Activated CD4-positive, alpha-beta memory T cell treated with anti-CD3 and anti-CD28 coated beads for 36 hours (primary cell): ENCODE measurements at regions of chr6 and their contacts with region 1.

Region 1: GRCh38 chr6:46129629-46130511 is at the start of gene ENPP4:
- DNase-seq: peak; percentile 94
- H3K4me3 Mint-ChIP-seq: peak within 1 kb of the TSS; percentile 86
- H3K27ac Mint-ChIP-seq: peak within 1 kb of the TSS; percentile 57
- H3K4me1 Mint-ChIP-seq: peaks cover 30% of the 10 kb centered on the region
- H3K27me3 Mint-ChIP-seq: no peaks in the 10 kb centered on the region
- total RNA-seq, gene ENPP4: 8.5 to 8.8 TPM

Region 2: DNA sequence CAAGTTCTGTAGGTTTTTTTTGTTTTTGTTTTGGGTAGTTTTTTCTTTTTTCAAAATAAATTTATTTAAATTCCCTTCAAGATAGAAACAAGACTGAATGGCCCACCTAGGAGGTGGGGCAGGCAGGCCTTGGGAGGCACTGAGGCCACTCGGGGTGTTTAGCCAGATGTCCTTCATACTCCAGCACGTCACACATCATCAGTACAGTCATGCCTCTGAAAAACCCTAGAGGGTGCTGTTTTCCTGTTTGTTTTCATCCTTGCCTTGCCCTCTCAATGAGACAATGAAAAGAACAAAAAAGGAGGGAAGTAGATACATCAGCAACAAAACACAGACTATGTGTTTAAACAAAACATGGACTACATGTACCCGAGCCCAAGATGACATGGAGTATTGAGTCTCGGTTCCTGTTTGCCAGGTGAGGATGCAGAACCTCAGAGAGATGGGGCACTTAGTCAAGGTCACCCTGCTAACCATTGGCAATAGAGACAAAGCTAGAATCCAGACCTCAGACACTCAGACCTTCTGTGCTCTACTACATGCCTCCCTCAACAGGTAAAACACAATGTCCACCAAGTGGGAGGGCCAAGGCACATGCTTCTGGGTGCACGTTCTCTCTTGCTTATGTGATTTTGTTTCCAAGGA is 87.4 kb before region 1 on chr6:
- CTCF ChIA-PET with region 1: no interaction called
- POLR2A ChIA-PET with region 1: no interaction called
- intact Hi-C with region 1: loop called (anchors 10 kb)
- DNase-seq: peak; percentile 23
- H3K4me3 Mint-ChIP-seq: no peak overlapping the region
- H3K27ac Mint-ChIP-seq: no peak overlapping the region
- H3K4me1 Mint-ChIP-seq: peaks cover 13% of the 10 kb centered on the region
- H3K27me3 Mint-ChIP-seq: peaks cover 1% of the 10 kb centered on the region

Region 3: DNA sequence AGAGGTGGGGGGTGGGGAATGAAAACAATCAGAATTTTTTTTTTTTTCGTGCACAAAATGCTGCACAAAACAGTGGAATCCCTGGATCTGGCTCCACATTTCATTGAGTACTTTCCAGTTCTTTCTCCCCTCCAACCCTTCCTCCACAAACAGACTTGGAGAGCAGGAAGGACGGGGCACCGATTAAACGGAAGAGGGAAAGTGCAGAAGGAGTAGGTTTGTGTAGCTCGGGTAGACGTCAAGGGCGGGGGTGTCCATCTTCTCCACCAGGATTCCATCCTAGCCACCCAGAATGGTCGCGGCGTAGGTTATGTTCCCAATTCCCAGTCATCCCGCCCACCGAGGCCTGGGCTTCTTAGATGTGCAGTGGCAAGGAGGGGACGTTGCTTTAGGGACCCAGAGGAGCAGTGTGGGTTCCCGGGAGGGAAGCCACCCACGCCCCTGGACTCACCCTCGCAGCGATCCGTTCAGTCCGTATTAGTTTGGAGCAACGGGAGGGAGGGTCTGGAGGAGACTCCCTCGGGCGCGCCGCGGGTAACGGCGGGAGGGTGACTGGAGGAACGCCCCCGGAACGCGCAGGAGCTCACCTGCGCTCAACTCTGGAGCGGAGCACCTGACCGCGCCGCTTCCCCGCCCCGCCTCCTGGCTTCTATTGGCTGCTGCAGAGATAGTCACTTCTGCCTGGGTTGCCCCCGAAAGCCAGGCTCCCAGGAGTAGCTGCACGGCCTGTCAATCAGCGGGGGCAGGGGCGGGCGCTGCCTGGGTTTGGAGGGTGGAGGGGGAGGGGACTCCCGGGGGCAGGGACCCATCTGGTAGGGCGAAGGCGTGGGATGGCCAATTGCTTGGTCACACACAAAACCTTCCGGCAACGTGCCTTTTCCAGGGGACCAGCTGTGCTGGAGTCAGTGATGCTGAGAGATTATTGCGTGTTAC is 40.8 kb after region 1 on chr6 and contains the start of gene ENPP5:
- CTCF ChIA-PET with region 1: no interaction called
- POLR2A ChIA-PET with region 1: interaction called, 3 read pairs
- intact Hi-C with region 1: loop called (anchors 2 kb)
- DNase-seq: peak; percentile 78
- H3K4me3 Mint-ChIP-seq: peak within 1 kb of the TSS; percentile 71
- H3K27ac Mint-ChIP-seq: no peak within 1 kb of the TSS
- H3K4me1 Mint-ChIP-seq: peaks cover 15% of the 10 kb centered on the region
- H3K27me3 Mint-ChIP-seq: peaks cover 35% of the 10 kb centered on the region
- total RNA-seq, gene ENPP5: 0.10 to 0.12 TPM

Region 4: DNA sequence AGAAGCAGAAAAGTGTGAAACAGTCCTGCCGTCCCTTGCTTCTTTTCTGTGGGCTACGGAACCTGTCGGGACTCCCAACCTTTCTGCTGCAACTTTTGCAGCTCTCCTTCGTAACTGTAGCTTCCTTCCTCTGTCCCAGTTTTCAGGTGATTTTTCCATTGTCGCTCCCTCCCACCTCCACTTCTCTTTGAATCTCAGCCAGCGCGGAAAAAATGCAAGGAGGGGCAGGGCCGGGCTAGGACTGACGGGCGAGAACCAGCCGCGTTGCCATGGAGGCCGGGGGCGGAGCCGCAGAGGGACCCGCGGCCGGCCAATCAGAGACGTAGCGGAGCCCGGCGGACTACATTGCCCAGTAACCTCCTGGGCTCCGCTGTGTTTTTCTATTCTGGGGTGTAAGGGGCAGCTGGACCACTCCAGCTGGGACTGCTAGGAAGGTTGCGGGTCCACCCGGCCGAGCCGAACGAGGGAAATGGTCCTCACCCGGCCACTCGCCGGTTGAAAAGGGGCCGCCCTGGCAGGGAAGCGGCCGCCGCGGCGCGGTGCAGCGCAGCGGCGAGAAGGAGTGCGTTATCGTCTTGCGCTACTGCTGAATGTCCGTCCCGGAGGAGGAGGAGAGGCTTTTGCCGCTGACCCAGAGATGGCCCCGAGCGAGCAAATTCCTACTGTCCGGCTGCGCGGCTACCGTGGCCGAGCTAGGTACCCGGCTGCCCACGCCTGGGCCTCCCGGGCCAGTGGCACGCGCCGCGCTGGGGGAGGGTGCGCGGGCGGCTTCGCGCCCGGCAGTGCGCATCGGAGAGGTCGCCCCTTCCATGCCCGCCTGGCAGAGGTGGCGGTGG is 523.0 kb after region 1 on chr6 and contains the starts of genes CYP39A1 and SLC25A27:
- CTCF ChIA-PET with region 1: no interaction called
- POLR2A ChIA-PET with region 1: no interaction called
- intact Hi-C with region 1: loop called (anchors 1 kb)
- DNase-seq: peak; percentile 89
- H3K4me3 Mint-ChIP-seq: peak within 1 kb of the TSS; percentile 76
- H3K27ac Mint-ChIP-seq: no peak within 1 kb of the TSS
- H3K4me1 Mint-ChIP-seq: peaks cover 13% of the 10 kb centered on the region
- H3K27me3 Mint-ChIP-seq: peaks cover 44% of the 10 kb centered on the region
- total RNA-seq, gene CYP39A1: not detected
- total RNA-seq, gene SLC25A27: 0.53 to 0.78 TPM